ENCODE measurements at regions of chr1 and their contacts with region 1.

Region 1: GRCh38 chr1:54810100-54810942 is 9.2 kb upstream of the TTC22 start:
- DNase-seq: peak; percentile 81
- H3K4me3 Mint-ChIP-seq: no peak overlapping the region
- H3K27ac Mint-ChIP-seq: no peak overlapping the region
- H3K4me1 Mint-ChIP-seq: peaks cover 4% of the 10 kb centered on the region
- H3K27me3 Mint-ChIP-seq: peaks cover 2% of the 10 kb centered on the region

Region 2: GRCh38 chr1:54376430-54377039 is 433.8 kb before region 1 on chr1:
- CTCF ChIA-PET with region 1: no interaction called
- POLR2A ChIA-PET with region 1: no interaction called
- intact Hi-C with region 1: no loop called
- DNase-seq: peak; percentile 59
- H3K4me3 Mint-ChIP-seq: no peak overlapping the region
- H3K27ac Mint-ChIP-seq: no peak overlapping the region
- H3K4me1 Mint-ChIP-seq: peaks cover 50% of the 10 kb centered on the region
- H3K27me3 Mint-ChIP-seq: no peaks in the 10 kb centered on the region

Region 3: GRCh38 chr1:54499360-54500106 is 310.8 kb before region 1 on chr1:
- CTCF ChIA-PET with region 1: interaction called, 15 read pairs
- POLR2A ChIA-PET with region 1: no interaction called
- intact Hi-C with region 1: loop called (anchors 1 kb)
- DNase-seq: peak; percentile 45
- H3K4me3 Mint-ChIP-seq: peak overlapping the region; percentile 54
- H3K27ac Mint-ChIP-seq: no peak overlapping the region
- H3K4me1 Mint-ChIP-seq: peaks cover 8% of the 10 kb centered on the region
- H3K27me3 Mint-ChIP-seq: peaks cover 35% of the 10 kb centered on the region

Region 4: GRCh38 chr1:54764133-54764921 is 46.0 kb before region 1 on chr1 and contains the start of gene PARS2:
- CTCF ChIA-PET with region 1: interaction called, 4 read pairs
- POLR2A ChIA-PET with region 1: no interaction called
- intact Hi-C with region 1: loop called (anchors 1 kb)
- DNase-seq: peak; percentile 97
- H3K4me3 Mint-ChIP-seq: peak within 1 kb of the TSS; percentile 93
- H3K27ac Mint-ChIP-seq: peak within 1 kb of the TSS; percentile 78
- H3K4me1 Mint-ChIP-seq: peaks cover 12% of the 10 kb centered on the region
- H3K27me3 Mint-ChIP-seq: no peaks in the 10 kb centered on the region
- total RNA-seq, gene PARS2: 5.6 to 5.7 TPM

Region 5: DNA sequence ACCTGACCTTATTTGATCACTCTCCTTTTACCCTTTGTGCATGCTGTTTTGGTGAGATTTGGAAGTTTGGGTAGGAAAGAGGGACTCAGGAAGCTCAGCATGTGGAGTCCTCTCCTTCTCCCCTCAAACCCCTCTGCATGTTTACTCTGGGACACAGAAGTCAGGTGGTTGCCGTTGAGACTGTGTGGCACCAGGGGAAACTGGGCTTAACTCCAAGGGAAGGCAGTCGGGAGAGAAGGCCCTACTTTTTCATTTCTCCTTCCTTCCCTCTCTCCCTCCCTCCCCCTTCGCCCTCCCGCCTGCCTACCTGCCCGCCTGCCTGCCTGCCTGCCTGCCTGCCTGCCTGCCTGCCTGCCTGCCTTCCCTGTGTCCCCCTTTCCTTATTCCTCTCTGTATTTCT is 25.6 kb after region 1 on chr1:
- CTCF ChIA-PET with region 1: no interaction called
- POLR2A ChIA-PET with region 1: no interaction called
- intact Hi-C with region 1: no loop called
- DNase-seq: no peak
- H3K4me3 Mint-ChIP-seq: no peak overlapping the region
- H3K27ac Mint-ChIP-seq: no peak overlapping the region
- H3K4me1 Mint-ChIP-seq: no peaks in the 10 kb centered on the region
- H3K27me3 Mint-ChIP-seq: peaks cover 1% of the 10 kb centered on the region

Region 6: GRCh38 chr1:54857741-54858627 is 47.7 kb after region 1 on chr1:
- CTCF ChIA-PET with region 1: no interaction called
- POLR2A ChIA-PET with region 1: no interaction called
- intact Hi-C with region 1: no loop called
- DNase-seq: no peak
- H3K4me3 Mint-ChIP-seq: no peak overlapping the region
- H3K27ac Mint-ChIP-seq: no peak overlapping the region
- H3K4me1 Mint-ChIP-seq: no peaks in the 10 kb centered on the region
- H3K27me3 Mint-ChIP-seq: no peaks in the 10 kb centered on the region